HCT116 (cell line): ENCODE measurements at regions of chr17 and their contacts with region 1.

Region 1: DNA sequence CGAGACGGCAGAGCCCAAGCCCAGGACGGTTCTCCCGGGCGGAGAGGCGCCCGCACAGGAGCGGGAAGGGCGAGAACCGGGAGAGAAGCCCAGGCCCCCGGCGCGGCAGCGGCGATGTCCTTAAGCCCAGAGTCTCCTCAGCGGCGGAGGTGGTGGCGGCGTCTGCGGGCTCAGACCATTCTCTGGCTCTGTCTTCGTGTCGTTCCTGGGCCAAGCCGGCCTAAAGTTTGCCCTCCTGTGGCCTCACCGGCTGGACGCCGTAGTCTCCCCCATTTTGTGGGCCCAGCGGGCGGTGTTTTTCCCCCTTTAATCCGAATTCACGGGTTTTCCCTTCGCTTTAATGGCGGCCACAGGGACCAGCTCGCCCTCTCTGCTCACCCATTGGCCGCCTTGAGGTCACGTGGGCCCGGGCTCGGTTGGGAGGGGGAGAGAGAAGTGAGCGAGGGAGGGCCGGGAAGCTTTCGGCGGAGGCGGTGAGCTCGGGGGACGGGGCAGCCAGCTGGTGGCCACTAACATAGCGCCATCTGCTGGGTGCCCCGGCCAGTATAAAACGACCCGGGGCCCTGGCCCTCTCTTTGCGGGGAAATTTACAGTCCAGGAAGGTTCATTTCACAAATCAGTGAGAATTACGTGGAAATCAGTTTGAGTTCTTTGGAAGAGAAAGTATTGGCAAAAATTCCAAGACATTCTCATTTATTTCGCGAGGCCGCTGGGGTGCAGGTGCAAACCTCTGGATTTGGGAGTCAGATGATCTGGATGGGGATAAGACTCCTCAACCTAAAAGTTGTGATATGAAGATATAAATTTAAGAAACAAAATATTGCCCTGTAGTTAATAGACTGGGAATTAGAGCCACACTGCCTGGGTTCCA is 755 bp upstream of the MED13 start:
- DNase-seq: peak; percentile 96
- ATAC-seq: peak; percentile 94
- H3K4me3 ChIP-seq: peak overlapping the region; percentile 89 to 95
- H3K27ac ChIP-seq: peak overlapping the region; percentile 95
- H3K4me1 ChIP-seq: peaks cover 7 to 20% of the 10 kb centered on the region in 2 experiments
- H3K27me3 ChIP-seq: no peaks in the 10 kb centered on the region
- CTCF ChIP-seq: peak; percentile 84 to 99 (median 98)
- POLR2A ChIP-seq: peak; percentile 69
- RAD21 ChIP-seq: peak; percentile 87

Region 2: DNA sequence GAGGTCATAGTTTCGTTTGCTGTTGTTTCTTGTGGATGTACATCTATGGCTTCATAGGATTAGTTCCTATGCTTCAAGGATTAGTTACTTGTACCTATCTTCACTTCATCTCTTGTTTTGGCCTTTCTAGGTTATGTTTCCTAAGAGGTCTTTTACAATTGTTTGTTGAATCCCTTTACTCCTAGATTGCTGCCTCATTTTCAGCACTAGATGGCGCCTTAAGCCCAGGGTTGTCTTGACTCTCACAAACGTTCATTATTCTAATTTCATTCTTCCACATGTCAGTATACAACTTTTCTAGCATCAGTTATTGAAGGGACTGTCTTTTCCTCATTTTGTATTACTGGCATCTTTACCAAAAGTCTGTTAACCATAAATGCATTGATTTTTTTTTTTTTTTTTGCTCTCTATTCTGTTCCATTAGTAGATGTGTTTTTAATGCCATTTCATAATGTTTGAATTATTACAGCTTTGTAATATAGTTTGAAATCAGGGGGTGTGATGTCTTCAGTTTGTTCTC is 429.9 kb before region 1 on chr17:
- CTCF ChIA-PET with region 1: interaction called, 3 read pairs
- POLR2A ChIA-PET with region 1: no interaction called
- RAD21 ChIA-PET with region 1: interaction called in 1 of 2 experiments, 4 read pairs
- intact Hi-C with region 1: loop called (anchors 5 kb)
- DNase-seq: peak; percentile 65
- ATAC-seq: peak; percentile 80
- H3K4me3 ChIP-seq: no peak overlapping the region
- H3K27ac ChIP-seq: no peak overlapping the region
- H3K4me1 ChIP-seq: no peaks in the 10 kb centered on the region
- H3K27me3 ChIP-seq: no peaks in the 10 kb centered on the region
- CTCF ChIP-seq: peak; percentile 88 to 99 (median 89)
- POLR2A ChIP-seq: no peak
- RAD21 ChIP-seq: peak; percentile 96

Region 3: GRCh38 chr17:61862975-61863800 is 202.6 kb before region 1 on chr17 and contains the start of gene BRIP1:
- CTCF ChIA-PET with region 1: no interaction called
- POLR2A ChIA-PET with region 1: interaction called, 3 read pairs
- RAD21 ChIA-PET with region 1: interaction called in 1 of 2 experiments, 3 read pairs
- intact Hi-C with region 1: loop called (anchors 2 kb)
- DNase-seq: peak; percentile 93
- ATAC-seq: peak; percentile 99
- H3K4me3 ChIP-seq: peak within 1 kb of the TSS; percentile 82 to 83
- H3K27ac ChIP-seq: peak within 1 kb of the TSS; percentile 59
- H3K4me1 ChIP-seq: peaks cover 13 to 20% of the 10 kb centered on the region in 2 experiments; a peak in 3 of 4 replicates
- H3K27me3 ChIP-seq: no peaks in the 10 kb centered on the region
- CTCF ChIP-seq: no peak
- POLR2A ChIP-seq: no peak
- RAD21 ChIP-seq: no peak
- total RNA-seq, gene BRIP1: 22.2 TPM

Region 4: GRCh38 chr17:62052757-62053338 is 13.0 kb before region 1 on chr17:
- CTCF ChIA-PET with region 1: interaction called, 23 read pairs
- POLR2A ChIA-PET with region 1: interaction called, 4 read pairs
- RAD21 ChIA-PET with region 1: no interaction called
- intact Hi-C with region 1: no loop called
- DNase-seq: no peak
- ATAC-seq: no peak
- H3K4me3 ChIP-seq: no peak overlapping the region
- H3K27ac ChIP-seq: no peak overlapping the region
- H3K4me1 ChIP-seq: no peaks in the 10 kb centered on the region; a peak in 1 of 4 replicates
- H3K27me3 ChIP-seq: no peaks in the 10 kb centered on the region
- CTCF ChIP-seq: no peak
- POLR2A ChIP-seq: no peak
- RAD21 ChIP-seq: no peak